RWPE1 (cell line): ENCODE measurements at regions of chr2 and their contacts with region 1.

Region 1: GRCh38 chr2:130332271-130333073 is 10.2 kb upstream of the IMP4 start:
- DNase-seq: peak; percentile 74
- H3K27ac ChIP-seq: peak overlapping the region; percentile 44
- CTCF ChIP-seq: peak; percentile 93

Region 2: DNA sequence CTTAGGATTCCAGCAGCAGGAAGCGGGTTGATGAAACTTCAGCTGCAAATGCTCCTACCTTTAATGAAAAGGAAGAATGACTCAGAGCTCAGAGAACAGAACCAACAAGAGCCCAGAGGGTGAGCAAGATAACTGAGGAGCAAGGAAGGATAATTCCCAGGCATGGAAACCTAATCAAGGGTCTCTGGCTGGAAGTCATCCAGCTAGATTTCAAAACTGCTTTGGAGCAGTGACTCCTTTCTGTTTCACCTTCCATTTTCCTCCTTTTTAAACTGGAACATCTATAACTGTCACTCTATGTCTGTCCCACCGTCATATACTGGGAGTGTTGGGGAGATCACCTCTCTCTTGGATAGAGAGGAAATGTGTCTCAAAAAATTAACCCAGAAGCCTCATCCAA is 501.5 kb before region 1 on chr2:
- CTCF ChIA-PET with region 1: no interaction called
- POLR2A ChIA-PET with region 1: no interaction called
- DNase-seq: no peak
- H3K27ac ChIP-seq: no peak overlapping the region
- CTCF ChIP-seq: no peak

Region 3: DNA sequence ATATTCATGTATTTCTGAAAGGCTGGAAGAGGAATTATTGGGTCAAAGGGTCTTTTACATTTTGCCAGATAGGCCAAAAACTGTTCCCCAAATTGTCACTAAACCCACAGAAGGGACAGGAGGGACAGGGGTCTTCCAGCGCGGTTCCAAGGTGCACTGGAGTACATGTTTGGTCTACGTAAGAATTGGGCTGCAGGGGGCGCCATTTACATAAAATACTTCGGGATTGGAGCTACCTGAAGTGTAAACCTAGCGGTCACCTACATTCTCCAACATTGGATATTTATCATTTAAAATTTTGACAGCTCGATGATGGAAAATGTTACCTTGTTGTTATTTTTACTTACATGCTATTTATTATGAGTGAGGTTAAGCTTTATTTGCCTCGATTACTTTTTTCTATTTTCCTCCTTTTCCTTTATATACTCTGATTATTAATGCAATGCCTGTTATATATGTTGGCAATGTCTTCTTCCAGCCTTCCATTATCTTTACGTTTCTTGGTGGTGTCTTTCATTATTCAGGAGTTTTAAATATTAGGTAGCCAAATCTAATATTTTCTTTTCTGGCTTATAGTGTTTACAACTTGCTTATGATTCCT is 396.0 kb before region 1 on chr2:
- CTCF ChIA-PET with region 1: interaction called, 10 read pairs
- POLR2A ChIA-PET with region 1: no interaction called
- DNase-seq: peak; percentile 39
- H3K27ac ChIP-seq: no peak overlapping the region
- CTCF ChIP-seq: peak; percentile 46

Region 4: GRCh38 chr2:130288461-130289403 is 43.7 kb before region 1 on chr2:
- CTCF ChIA-PET with region 1: interaction called, 29 read pairs
- POLR2A ChIA-PET with region 1: interaction called, 3 read pairs
- DNase-seq: peak; percentile 59
- H3K27ac ChIP-seq: peak overlapping the region; percentile 60
- CTCF ChIP-seq: peak; percentile 62